IMR-90 (cell line): ENCODE measurements at regions of chr13 and their contacts with region 1.

Region 1: DNA sequence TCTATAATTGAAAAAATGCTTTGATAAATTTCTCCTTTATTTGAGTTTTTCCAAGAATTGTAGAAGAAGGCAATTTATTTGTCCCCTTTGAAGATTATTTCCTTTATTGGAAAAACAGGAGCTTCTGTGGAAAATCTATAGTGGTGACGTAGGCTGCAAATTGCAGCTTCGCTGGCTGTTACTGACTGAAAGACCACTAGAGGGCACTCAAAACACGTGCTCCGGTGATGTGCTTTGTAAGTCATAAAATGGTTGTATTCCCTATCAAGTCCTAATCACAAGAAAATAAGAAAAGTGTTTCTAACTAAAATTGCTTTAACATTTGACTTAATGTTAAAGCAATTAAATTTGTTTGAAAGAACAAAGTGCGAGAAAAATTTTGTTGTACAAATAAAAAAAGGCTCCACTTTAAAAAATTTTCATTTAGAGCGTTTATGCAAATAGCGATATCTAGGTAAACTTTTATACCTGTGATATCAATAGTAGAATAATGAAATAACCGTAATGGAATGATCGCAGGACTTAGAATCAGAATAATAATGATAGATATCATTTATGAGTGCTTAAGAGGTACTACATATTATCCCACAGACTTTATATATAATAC is 638.2 kb upstream of the SPRY2 start:
- DNase-seq: peak; percentile 54
- ATAC-seq: no peak; the same call in 1 of the 2 replicates
- H3K4me3 ChIP-seq: no peak overlapping the region
- H3K27ac ChIP-seq: no peak overlapping the region
- H3K4me1 ChIP-seq: no peaks in the 10 kb centered on the region
- H3K27me3 ChIP-seq: no peaks in the 10 kb centered on the region
- CTCF ChIP-seq: peak; percentile 64
- POLR2A ChIP-seq: no peak
- RAD21 ChIP-seq: peak; percentile 54

Region 2: GRCh38 chr13:80419416-80419815 is 559.7 kb before region 1 on chr13:
- CTCF ChIA-PET with region 1: no interaction called
- POLR2A ChIA-PET with region 1: interaction called, 10 read pairs
- dilution Hi-C with region 1: no loop called
- in situ Hi-C with region 1: no loop called
- intact Hi-C with region 1: no loop called
- DNase-seq: no peak
- ATAC-seq: no peak
- H3K4me3 ChIP-seq: no peak overlapping the region
- H3K27ac ChIP-seq: no peak overlapping the region
- H3K4me1 ChIP-seq: no peaks in the 10 kb centered on the region
- H3K27me3 ChIP-seq: no peaks in the 10 kb centered on the region
- CTCF ChIP-seq: no peak
- POLR2A ChIP-seq: no peak
- RAD21 ChIP-seq: no peak